Activated T-helper 1 cell treated with anti-CD3 and anti-CD28 coated beads, Interleukin-12 subunit alpha, Interleukin-12 subunit beta, Interleukin-2, Interleukin-4 antibody, amounts not matched to agents 30 ng/mL and 10 ng/mL and 1 ng/mL, durations not matched to agents 14 hours and 24 hours and 36 hours (primary cell): ENCODE measurements at regions of chr2 and their contacts with region 1.

Region 1: GRCh38 chr2:227415538-227416424 is 28.0 kb upstream of the SCYGR1 start:
- DNase-seq: no peak
- H3K4me3 Mint-ChIP-seq: peak overlapping the region; percentile 37
- H3K27ac Mint-ChIP-seq: peak overlapping the region; percentile 63
- H3K4me1 Mint-ChIP-seq: peaks cover 63% of the 10 kb centered on the region
- H3K27me3 Mint-ChIP-seq: no peaks in the 10 kb centered on the region

Region 2: GRCh38 chr2:226835796-226836547 is 579.8 kb before region 1 on chr2 and contains the start of gene RHBDD1:
- intact Hi-C with region 1: loop called (anchors 1 kb)
- DNase-seq: peak; percentile 93
- H3K4me3 Mint-ChIP-seq: peak within 1 kb of the TSS; percentile 92
- H3K27ac Mint-ChIP-seq: peak within 1 kb of the TSS; percentile 99
- H3K4me1 Mint-ChIP-seq: peaks cover 62% of the 10 kb centered on the region
- H3K27me3 Mint-ChIP-seq: no peaks in the 10 kb centered on the region
- total RNA-seq, gene RHBDD1: 39.9 and 48.0 TPM in 2 replicates

Region 3: DNA sequence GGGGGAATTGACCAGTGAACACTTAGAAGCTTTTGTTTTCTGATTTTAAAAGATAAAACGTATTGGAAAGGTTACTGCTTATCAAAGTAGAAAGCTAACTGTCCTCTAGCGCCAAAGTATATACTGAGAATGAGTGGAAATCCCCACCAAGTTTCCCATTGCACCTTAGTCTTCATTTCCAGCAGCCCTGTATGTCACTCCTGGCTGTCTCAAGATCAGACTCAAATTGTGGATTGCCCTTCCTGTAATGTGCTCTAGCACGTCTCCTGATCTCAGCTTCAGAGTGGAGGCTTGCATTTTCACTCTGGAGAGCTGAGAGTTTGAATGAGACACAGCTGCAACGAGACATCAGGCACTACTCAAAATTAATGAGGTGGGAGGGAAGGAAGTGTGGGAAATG is 64.1 kb before region 1 on chr2:
- intact Hi-C with region 1: loop called (anchors 1 kb)
- DNase-seq: no peak
- H3K4me3 Mint-ChIP-seq: no peak overlapping the region
- H3K27ac Mint-ChIP-seq: peak overlapping the region; percentile 16
- H3K4me1 Mint-ChIP-seq: peaks cover 13% of the 10 kb centered on the region
- H3K27me3 Mint-ChIP-seq: no peaks in the 10 kb centered on the region

Region 4: GRCh38 chr2:227460070-227460485 is 44.3 kb after region 1 on chr2:
- intact Hi-C with region 1: loop called (anchors 1 kb)
- DNase-seq: peak; percentile 29
- H3K4me3 Mint-ChIP-seq: peak overlapping the region; percentile 59
- H3K27ac Mint-ChIP-seq: peak overlapping the region; percentile 84
- H3K4me1 Mint-ChIP-seq: peaks cover 74% of the 10 kb centered on the region
- H3K27me3 Mint-ChIP-seq: no peaks in the 10 kb centered on the region

Region 5: DNA sequence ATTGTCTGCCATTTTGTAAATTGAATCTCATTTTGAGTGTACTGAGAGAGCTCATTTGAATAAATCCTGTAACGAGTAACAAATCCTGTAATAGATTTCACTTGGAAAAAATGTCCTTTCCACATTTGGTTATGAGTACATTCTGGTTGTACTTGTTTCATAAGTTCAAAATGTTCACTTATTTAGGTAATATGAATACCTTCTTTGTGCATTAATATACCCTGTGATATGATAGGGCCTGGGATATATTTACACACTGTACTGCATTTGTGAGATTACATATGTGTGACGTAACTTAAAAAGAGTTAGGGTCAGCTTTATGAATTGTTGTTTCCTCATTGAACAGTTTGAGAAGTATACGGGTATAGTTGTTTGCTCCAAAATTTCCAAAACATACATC is 72.3 kb after region 1 on chr2:
- intact Hi-C with region 1: loop called (anchors 1 kb)
- DNase-seq: no peak
- H3K4me3 Mint-ChIP-seq: peak overlapping the region; percentile 15
- H3K27ac Mint-ChIP-seq: peak overlapping the region; percentile 64
- H3K4me1 Mint-ChIP-seq: peaks cover 28% of the 10 kb centered on the region
- H3K27me3 Mint-ChIP-seq: no peaks in the 10 kb centered on the region

Region 6: GRCh38 chr2:227817850-227818674 is 402.3 kb after region 1 on chr2:
- intact Hi-C with region 1: loop called (anchors 1 kb)
- DNase-seq: peak; percentile 21
- H3K4me3 Mint-ChIP-seq: no peak overlapping the region
- H3K27ac Mint-ChIP-seq: peak overlapping the region; percentile 77
- H3K4me1 Mint-ChIP-seq: peaks cover 21% of the 10 kb centered on the region
- H3K27me3 Mint-ChIP-seq: peaks cover 5% of the 10 kb centered on the region